Posterior cingulate gyrus (tissue), 11 donors: ENCODE measurements at regions of chrX and their contacts with region 1.

Region 1: GRCh38 chrX:41333744-41334259 is at the start of gene DDX3X:
- DNase-seq: peak; percentile 77 to 99 (median 89)

Region 2: GRCh38 chrX:41084044-41084892 is 249.5 kb before region 1 on chrX:
- intact Hi-C with region 1: loop called (anchors 5 kb)
- DNase-seq: peak; percentile 78 to 99 (median 93)

Region 3: DNA sequence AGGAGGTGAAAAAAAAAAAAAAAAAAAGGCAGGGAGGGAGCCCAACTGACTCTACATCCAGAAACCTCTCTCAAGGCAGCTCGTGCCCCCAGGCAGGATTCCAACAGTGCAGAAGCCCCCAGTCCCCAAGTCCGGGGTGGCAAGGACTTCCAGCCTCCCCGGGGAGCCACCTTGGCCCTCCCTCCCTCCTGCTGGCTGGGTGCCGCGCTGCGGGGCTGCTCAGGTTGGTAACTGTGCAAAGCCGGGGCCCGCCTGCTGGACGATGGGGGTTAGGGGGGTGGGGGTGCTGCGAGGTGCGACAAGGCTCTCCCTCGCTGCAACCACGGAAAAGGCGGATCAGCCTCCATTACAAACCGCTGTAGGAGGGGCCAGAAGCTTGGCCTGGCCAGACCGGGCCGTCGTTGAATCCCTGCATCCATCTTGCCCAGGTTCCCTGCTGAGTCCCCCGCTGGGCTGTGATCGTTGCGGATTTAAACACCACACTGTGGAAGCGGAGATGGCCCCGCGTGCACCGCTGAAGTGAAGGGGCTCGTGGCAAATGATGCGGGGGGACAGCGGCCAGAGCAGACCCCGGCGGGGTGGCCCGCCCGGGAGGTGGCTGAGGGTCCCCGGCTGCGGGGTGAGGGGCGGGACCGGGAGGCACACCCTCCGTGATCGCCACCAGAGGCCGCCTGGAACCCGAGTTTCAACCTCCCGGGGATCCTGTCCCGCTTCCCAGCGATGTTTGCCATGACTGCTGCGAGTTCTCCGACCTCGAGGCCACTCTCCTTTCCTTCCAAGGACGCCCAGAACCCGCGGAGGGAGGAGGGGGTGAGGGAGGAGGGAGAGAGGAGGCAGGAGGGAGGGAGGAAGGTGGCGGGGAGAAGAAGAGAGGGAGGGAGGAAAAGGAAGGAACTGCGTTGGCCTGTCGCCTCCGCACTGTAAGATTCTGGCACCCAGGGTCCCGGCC is 57.9 kb before region 1 on chrX:
- intact Hi-C with region 1: loop called (anchors 10 kb)
- DNase-seq: peak; percentile 35 to 94 (median 60)